ENCODE measurements at regions of chr1 and their contacts with region 1.

Region 1: GRCh38 chr1:241531195-241532161 is 700 bp upstream of the KMO start:
- DNase-seq: no peak
- H3K4me3 ChIP-seq: peak overlapping the region; percentile 62
- H3K27ac ChIP-seq: peak overlapping the region; percentile 31
- H3K4me1 ChIP-seq: no peaks in the 10 kb centered on the region
- H3K27me3 ChIP-seq: peaks cover 34% of the 10 kb centered on the region
- CTCF ChIP-seq: peak; percentile 62

Region 2: GRCh38 chr1:241142493-241142892 is 389.0 kb before region 1 on chr1:
- intact Hi-C with region 1: no loop called
- DNase-seq: no peak
- H3K4me3 ChIP-seq: no peak overlapping the region
- H3K27ac ChIP-seq: no peak overlapping the region
- H3K4me1 ChIP-seq: no peaks in the 10 kb centered on the region
- H3K27me3 ChIP-seq: no peaks in the 10 kb centered on the region
- CTCF ChIP-seq: no peak

Region 3: GRCh38 chr1:241352401-241352800 is 179.1 kb before region 1 on chr1:
- intact Hi-C with region 1: no loop called
- DNase-seq: no peak
- H3K4me3 ChIP-seq: no peak overlapping the region
- H3K27ac ChIP-seq: no peak overlapping the region
- H3K4me1 ChIP-seq: peaks cover 9% of the 10 kb centered on the region
- H3K27me3 ChIP-seq: peaks cover 54% of the 10 kb centered on the region
- CTCF ChIP-seq: no peak

Region 4: GRCh38 chr1:241423541-241424479 is 107.7 kb before region 1 on chr1:
- intact Hi-C with region 1: no loop called
- DNase-seq: no peak
- H3K4me3 ChIP-seq: peak overlapping the region; percentile 59
- H3K27ac ChIP-seq: no peak overlapping the region
- H3K4me1 ChIP-seq: peaks cover 10% of the 10 kb centered on the region
- H3K27me3 ChIP-seq: peaks cover 60% of the 10 kb centered on the region
- CTCF ChIP-seq: no peak

Region 5: GRCh38 chr1:241627453-241628259 is 96.2 kb after region 1 on chr1:
- intact Hi-C with region 1: loop called (anchors 10 kb)
- DNase-seq: no peak
- H3K4me3 ChIP-seq: no peak overlapping the region
- H3K27ac ChIP-seq: no peak overlapping the region
- H3K4me1 ChIP-seq: no peaks in the 10 kb centered on the region
- H3K27me3 ChIP-seq: no peaks in the 10 kb centered on the region
- CTCF ChIP-seq: peak; percentile 61

Measured in left ventricle myocardium inferior (tissue), 1 donor.